ENCODE measurements at regions of chr7 and their contacts with region 1.

Region 1: DNA sequence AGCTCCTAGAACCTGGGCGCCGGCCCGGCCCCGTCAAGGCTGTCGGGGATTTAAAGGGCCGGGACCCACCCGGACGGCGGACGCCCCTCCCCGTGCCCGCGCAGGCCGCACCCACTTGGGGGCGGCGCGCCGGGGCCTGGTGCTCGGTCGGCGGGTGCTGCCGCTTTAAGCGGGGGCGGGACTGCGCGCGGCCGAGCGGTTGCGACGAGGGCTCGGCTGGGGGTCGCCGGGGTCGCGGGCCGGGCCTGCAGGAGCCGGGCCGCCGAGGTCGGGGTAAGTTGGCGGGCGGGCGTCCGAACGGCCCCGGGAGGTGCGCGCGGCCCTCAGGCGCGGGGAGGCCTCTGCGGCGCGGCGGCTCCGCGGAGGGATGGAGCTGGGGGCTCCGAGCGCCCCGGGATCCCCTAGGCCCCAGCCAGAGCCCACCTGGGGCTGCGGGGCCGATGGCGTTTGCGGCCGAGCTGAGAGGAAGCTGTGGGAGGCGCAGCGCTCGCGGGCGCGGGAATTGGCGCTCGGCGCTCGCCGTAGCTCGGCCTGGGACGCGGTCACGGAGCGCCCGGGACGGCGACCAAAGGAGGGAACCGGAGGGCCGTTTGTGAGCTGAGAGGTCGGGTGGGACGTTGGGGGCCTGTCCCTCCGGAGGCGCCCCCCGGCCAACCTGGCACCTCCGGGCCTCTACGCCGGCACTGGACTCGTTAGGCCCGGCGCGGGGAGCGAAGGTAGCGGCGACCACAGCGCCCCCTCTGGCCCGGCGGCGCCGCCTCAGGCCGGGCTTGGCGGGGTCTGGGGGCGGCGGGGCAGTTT is at the start of gene TRRAP:
- DNase-seq: no peak
- H3K4me3 ChIP-seq: peak within 1 kb of the TSS; percentile 87
- H3K27me3 ChIP-seq: no peaks in the 10 kb centered on the region
- CTCF ChIP-seq: peak; percentile 67
- polyA plus RNA-seq, gene TRRAP: 11.8 and 17.2 TPM in 2 replicates

Region 2: DNA sequence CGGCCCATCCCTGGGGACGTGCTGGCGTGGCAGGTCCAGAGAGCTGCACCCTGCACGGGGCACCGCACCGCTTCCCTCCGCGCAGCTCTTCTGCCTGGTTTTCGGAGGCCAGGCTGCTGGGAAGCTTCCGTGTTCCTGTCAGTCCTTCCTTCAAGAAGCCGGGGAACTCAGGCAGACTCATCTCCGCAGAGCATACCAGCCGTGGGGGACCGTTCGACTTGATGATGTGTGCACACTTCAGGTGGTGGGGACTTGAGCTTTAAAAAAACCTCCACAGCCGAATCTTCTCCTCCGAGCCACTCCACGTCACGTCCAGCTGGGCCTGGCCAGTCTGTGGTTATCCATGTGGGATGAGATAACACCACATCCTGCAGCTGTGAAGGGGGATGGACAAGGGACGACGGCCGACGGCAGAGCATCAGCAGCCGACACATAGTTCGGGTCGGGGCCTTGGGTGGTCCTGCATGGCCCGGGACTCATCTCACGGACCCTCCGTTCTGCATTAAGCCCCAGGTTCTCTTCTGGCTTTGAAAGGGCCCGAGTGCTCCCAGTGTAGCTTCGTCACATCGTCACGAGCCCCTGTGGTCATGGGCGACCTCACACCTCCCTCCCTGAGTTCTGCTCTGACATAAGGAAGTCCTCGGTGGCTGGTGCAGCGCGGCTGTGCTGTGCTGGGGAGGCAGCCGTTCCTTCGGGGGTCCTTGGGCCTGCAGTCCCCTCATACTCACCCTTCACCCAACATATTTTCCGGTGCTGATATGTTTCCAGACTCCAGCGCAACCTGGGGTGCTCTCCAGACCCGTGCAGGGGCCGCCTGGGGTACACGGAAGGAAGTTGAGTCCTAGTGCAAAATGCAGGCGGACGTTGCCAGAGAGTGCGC is 671.9 kb before region 1 on chr7:
- CTCF ChIA-PET with region 1: no interaction called
- POLR2A ChIA-PET with region 1: interaction called, 11 read pairs
- DNase-seq: no peak
- H3K4me3 ChIP-seq: no peak overlapping the region
- H3K27me3 ChIP-seq: no peaks in the 10 kb centered on the region
- CTCF ChIP-seq: no peak

Region 3: DNA sequence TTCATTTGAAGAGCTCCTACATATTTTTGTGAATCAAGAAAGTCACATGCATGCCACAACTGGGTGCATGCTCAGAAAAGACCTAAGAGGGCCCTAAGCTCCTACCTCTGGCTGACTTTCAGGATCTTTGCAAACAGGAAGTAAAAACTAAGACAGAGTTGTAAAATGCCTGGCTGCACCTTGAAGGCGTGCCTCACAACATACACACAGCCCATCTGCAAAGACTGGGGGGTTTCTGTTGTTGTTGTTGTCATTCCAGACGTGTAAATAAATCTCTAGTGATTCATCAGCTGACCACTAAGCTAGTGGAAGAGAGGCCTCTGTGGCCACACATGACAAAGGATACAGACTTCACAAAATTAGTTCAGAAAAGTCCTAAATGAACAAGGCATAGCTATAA is 233.5 kb after region 1 on chr7:
- CTCF ChIA-PET with region 1: no interaction called
- POLR2A ChIA-PET with region 1: no interaction called
- DNase-seq: no peak
- H3K4me3 ChIP-seq: no peak overlapping the region
- H3K27me3 ChIP-seq: no peaks in the 10 kb centered on the region
- CTCF ChIP-seq: no peak

Measured in BJ (cell line).